Naive thymus-derived CD4-positive, alpha-beta T cell (primary cell): ENCODE measurements at regions of chr18 and their contacts with region 1.

Region 1: DNA sequence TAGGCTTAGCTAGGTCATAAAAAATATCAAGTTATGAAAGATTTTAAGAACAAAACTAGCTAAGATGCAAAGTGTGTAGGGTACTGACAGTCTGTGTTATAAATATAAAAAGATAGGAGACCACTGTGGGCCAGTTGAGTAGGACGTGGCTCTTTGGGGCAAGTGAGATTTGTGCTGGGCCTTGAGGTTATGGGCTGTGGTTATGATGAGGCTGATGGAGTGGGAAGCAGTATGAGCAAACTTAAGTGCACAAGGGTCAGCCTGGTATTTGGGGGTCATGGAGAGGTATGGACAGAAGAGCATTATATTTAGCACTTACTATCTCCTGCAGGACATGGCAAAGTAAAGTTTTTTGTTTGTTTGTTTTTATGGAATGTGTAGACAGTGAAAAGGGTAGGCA is 70.1 kb downstream of the SETBP1 start:
- DNase-seq: no peak
- ATAC-seq: no peak
- H3K4me3 ChIP-seq: no peak overlapping the region
- H3K4me3 Mint-ChIP-seq: no peak overlapping the region
- H3K27ac ChIP-seq: no peak overlapping the region
- H3K27ac Mint-ChIP-seq: no peak overlapping the region
- H3K4me1 ChIP-seq: no peaks in the 10 kb centered on the region
- H3K4me1 Mint-ChIP-seq: peaks cover 0 to 8% (median 0%) of the 10 kb centered on the region in 7 donors
- H3K27me3 ChIP-seq: no peaks in the 10 kb centered on the region
- H3K27me3 Mint-ChIP-seq: peaks cover 0 to 62% (median 0%) of the 10 kb centered on the region in 5 donors

Region 2: GRCh38 chr18:44733754-44734465 is 16.9 kb before region 1 on chr18:
- CTCF ChIA-PET with region 1: no interaction called
- POLR2A ChIA-PET with region 1: no interaction called
- intact Hi-C with region 1: loop called in 1 of 2 experiments (anchors 2 kb)
- DNase-seq: no peak
- ATAC-seq: no peak
- H3K4me3 ChIP-seq: no peak overlapping the region
- H3K4me3 Mint-ChIP-seq: no peak overlapping the region
- H3K27ac ChIP-seq: no peak overlapping the region
- H3K27ac Mint-ChIP-seq: no peak overlapping the region
- H3K4me1 ChIP-seq: peaks cover 0 to 27% of the 10 kb centered on the region in 2 donors
- H3K4me1 Mint-ChIP-seq: peaks cover 0 to 63% (median 6%) of the 10 kb centered on the region in 7 donors
- H3K27me3 ChIP-seq: no peaks in the 10 kb centered on the region
- H3K27me3 Mint-ChIP-seq: peaks cover 0 to 50% (median 0%) of the 10 kb centered on the region in 5 donors